Caco-2 (cell line): ENCODE measurements at regions of chr2 and their contacts with region 1.

Region 1: GRCh38 chr2:175282290-175282689 is 100.8 kb upstream of the ATP5MC3 start:
- DNase-seq: peak in 1 of 2 experiments; percentile 13
- H3K4me3 ChIP-seq: no peak overlapping the region
- H3K4me3 Mint-ChIP-seq: no peak overlapping the region
- H3K27ac Mint-ChIP-seq: no peak overlapping the region
- H3K4me1 ChIP-seq: no peaks in the 10 kb centered on the region
- H3K4me1 Mint-ChIP-seq: no peaks in the 10 kb centered on the region
- H3K27me3 ChIP-seq: no peaks in the 10 kb centered on the region
- H3K27me3 Mint-ChIP-seq: peaks cover 12% of the 10 kb centered on the region
- CTCF ChIP-seq: peak; percentile 42 to 54

Region 2: DNA sequence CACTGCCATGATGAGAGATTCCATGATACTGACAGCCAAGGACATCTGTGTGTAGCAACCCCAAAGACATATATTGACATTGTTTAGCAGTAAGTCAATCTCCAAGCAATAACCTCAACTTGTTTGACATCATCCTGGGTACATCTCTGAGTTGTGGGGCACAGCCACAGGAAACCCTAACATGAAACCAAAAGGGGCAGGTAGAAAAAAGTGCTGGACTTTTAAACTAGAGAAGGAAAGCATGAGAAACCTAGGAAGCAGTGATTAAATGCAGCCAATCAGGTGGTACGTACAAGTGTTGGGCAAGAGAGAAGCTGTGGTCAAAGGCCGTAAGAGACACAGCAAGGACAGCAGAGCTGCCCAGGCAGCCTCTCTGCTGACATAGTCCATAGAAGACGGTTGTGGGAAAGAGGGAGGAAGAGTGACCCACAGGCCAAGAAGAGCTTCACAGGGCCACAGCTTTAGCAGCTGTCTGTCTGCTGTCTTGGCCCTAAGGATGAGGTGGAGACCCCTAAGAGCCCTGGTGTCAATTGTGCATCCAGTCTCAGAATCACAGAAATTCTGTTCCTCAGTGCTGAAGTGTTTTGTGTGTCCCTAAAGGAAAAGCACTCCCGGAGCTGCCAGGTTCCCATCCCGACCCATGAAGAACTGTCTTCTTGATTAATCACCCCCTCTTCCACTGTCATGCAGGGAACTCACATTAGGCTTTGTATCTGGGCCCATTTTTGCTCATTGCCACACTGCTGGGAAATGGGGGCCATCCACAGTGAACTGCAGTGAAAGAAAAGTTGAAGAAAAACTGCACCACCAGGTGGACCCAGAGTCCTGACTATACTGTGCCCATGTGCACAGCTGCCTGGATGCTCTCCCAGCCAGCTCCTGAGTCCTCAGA is 251.7 kb before region 1 on chr2:
- CTCF ChIA-PET with region 1: no interaction called
- POLR2A ChIA-PET with region 1: no interaction called
- intact Hi-C with region 1: loop called (anchors 1 kb)
- DNase-seq: peak; percentile 57 to 58
- H3K4me3 ChIP-seq: no peak overlapping the region
- H3K4me3 Mint-ChIP-seq: no peak overlapping the region
- H3K27ac Mint-ChIP-seq: no peak overlapping the region
- H3K4me1 ChIP-seq: no peaks in the 10 kb centered on the region
- H3K4me1 Mint-ChIP-seq: no peaks in the 10 kb centered on the region
- H3K27me3 ChIP-seq: no peaks in the 10 kb centered on the region
- H3K27me3 Mint-ChIP-seq: no peaks in the 10 kb centered on the region
- CTCF ChIP-seq: peak; percentile 45 to 50

Region 3: DNA sequence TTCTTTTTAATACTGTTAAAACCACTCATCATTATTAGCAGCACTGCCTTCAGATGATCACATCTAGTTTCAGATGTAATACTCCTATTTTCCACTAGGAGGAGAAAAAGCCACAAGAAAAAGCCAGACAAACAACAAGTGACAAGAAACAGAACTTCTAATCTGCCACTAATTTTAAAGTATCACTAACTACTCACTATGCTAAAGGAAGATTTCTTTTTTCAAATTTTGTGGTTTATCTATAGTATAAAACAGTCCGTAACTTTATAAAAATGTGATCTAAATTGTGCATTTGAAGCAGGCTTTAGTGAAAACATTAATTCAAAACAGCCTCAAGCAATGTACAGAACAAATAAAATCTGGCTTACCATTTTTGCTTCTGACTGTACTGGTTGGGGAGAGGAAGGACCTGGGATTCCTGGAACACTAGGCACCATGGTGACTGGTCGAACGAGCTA is 171.1 kb before region 1 on chr2:
- CTCF ChIA-PET with region 1: no interaction called
- POLR2A ChIA-PET with region 1: no interaction called
- intact Hi-C with region 1: loop called (anchors 1 kb)
- DNase-seq: peak in 1 of 2 experiments; percentile 49
- H3K4me3 ChIP-seq: no peak overlapping the region
- H3K4me3 Mint-ChIP-seq: no peak overlapping the region
- H3K27ac Mint-ChIP-seq: no peak overlapping the region
- H3K4me1 ChIP-seq: no peaks in the 10 kb centered on the region
- H3K4me1 Mint-ChIP-seq: no peaks in the 10 kb centered on the region
- H3K27me3 ChIP-seq: no peaks in the 10 kb centered on the region
- H3K27me3 Mint-ChIP-seq: no peaks in the 10 kb centered on the region
- CTCF ChIP-seq: peak; percentile 58 to 66

Region 4: GRCh38 chr2:175181104-175181876 is 101.0 kb before region 1 on chr2 and contains the start of gene ATP5MC3:
- CTCF ChIA-PET with region 1: no interaction called
- POLR2A ChIA-PET with region 1: no interaction called
- intact Hi-C with region 1: no loop called
- DNase-seq: peak; percentile 95 to 96
- H3K4me3 ChIP-seq: peak within 1 kb of the TSS; percentile 74
- H3K4me3 Mint-ChIP-seq: peak within 1 kb of the TSS; percentile 98
- H3K27ac Mint-ChIP-seq: peak within 1 kb of the TSS; percentile 87
- H3K4me1 ChIP-seq: peaks cover 4% of the 10 kb centered on the region; the same call in 1 of the 2 replicates
- H3K4me1 Mint-ChIP-seq: peaks cover 9% of the 10 kb centered on the region
- H3K27me3 ChIP-seq: no peaks in the 10 kb centered on the region
- H3K27me3 Mint-ChIP-seq: no peaks in the 10 kb centered on the region
- CTCF ChIP-seq: no peak
- total RNA-seq, gene ATP5MC3: 299 and 337 TPM in 2 replicates

Region 5: DNA sequence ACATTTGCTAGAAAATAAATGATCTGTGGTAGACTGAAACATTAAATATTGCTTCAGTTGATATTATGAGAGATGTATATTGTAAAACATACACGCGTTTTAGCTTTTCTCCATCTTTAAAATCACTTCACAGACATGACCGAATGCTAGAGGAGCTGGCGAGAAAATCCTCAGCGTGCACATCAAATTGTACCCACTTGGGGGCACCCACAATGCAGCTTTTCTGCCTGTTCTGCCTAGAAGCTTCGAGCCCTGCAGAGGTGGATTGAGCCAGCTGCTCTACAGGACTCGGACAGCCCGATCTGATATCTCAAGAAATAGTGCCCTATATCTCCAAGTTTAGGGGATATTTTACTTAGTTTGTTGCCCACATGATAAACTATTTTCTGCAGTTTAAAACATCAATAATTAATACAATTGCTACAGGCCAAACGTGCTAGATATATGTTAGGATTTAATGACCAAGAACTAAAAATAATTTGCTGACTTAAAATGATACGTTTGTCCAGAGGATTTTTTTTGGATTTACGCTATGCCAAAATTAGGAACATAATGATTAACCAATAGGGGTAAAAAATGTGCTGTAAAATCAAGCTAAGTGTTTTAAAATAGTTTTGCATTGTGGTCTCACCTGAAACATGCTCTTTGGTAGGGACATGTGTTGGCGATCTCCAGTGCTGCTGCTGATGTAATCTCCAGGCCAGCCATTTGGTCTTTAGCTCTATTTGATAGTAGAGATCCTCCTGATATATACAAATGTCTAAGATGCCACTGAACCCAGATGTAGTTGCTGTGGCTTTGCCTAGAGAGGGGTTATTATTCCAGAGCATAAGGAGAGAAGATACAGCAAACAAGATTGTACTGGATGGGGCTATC is 78.4 kb before region 1 on chr2:
- CTCF ChIA-PET with region 1: interaction called, 12 read pairs
- POLR2A ChIA-PET with region 1: no interaction called
- intact Hi-C with region 1: loop called (anchors 1 kb)
- DNase-seq: peak; percentile 66 to 71
- H3K4me3 ChIP-seq: no peak overlapping the region
- H3K4me3 Mint-ChIP-seq: no peak overlapping the region
- H3K27ac Mint-ChIP-seq: no peak overlapping the region
- H3K4me1 ChIP-seq: no peaks in the 10 kb centered on the region
- H3K4me1 Mint-ChIP-seq: peaks cover 7% of the 10 kb centered on the region
- H3K27me3 ChIP-seq: no peaks in the 10 kb centered on the region
- H3K27me3 Mint-ChIP-seq: peaks cover 10% of the 10 kb centered on the region
- CTCF ChIP-seq: peak; percentile 66 to 70

Region 6: GRCh38 chr2:175251425-175252041 is 30.8 kb before region 1 on chr2:
- CTCF ChIA-PET with region 1: interaction called, 16 read pairs
- POLR2A ChIA-PET with region 1: no interaction called
- intact Hi-C with region 1: loop called (anchors 1 kb)
- DNase-seq: peak in 1 of 2 experiments; percentile 29
- H3K4me3 ChIP-seq: no peak overlapping the region
- H3K4me3 Mint-ChIP-seq: no peak overlapping the region
- H3K27ac Mint-ChIP-seq: no peak overlapping the region
- H3K4me1 ChIP-seq: no peaks in the 10 kb centered on the region
- H3K4me1 Mint-ChIP-seq: no peaks in the 10 kb centered on the region
- H3K27me3 ChIP-seq: no peaks in the 10 kb centered on the region
- H3K27me3 Mint-ChIP-seq: peaks cover 16% of the 10 kb centered on the region
- CTCF ChIP-seq: peak; percentile 61 to 68

Region 7: GRCh38 chr2:175805442-175806124 is 523.3 kb after region 1 on chr2:
- CTCF ChIA-PET with region 1: no interaction called
- POLR2A ChIA-PET with region 1: no interaction called
- intact Hi-C with region 1: no loop called
- DNase-seq: no peak
- H3K4me3 ChIP-seq: no peak overlapping the region
- H3K4me3 Mint-ChIP-seq: no peak overlapping the region
- H3K27ac Mint-ChIP-seq: no peak overlapping the region
- H3K4me1 ChIP-seq: no peaks in the 10 kb centered on the region
- H3K4me1 Mint-ChIP-seq: peaks cover 6% of the 10 kb centered on the region
- H3K27me3 ChIP-seq: no peaks in the 10 kb centered on the region
- H3K27me3 Mint-ChIP-seq: peaks cover 14% of the 10 kb centered on the region
- CTCF ChIP-seq: no peak